ENCODE measurements at regions of chr15 and their contacts with region 1.

Region 1: GRCh38 chr15:100873029-100873677 is 6.5 kb upstream of the ALDH1A3 start:
- DNase-seq: peak; percentile 85
- H3K4me3 ChIP-seq: no peak overlapping the region
- H3K27ac ChIP-seq: no peak overlapping the region
- H3K4me1 ChIP-seq: no peaks in the 10 kb centered on the region
- H3K27me3 ChIP-seq: peaks cover 0 to 1% (median 0%) of the 10 kb centered on the region in 3 donors
- CTCF ChIP-seq: peak; percentile 90 to 98 (median 92)
- EP300 ChIP-seq: no peak
- POLR2A ChIP-seq: no peak

Region 2: GRCh38 chr15:100671858-100672543 is 201.2 kb before region 1 on chr15:
- intact Hi-C with region 1: loop called (anchors 5 kb)
- DNase-seq: no peak
- H3K4me3 ChIP-seq: no peak overlapping the region
- H3K27ac ChIP-seq: no peak overlapping the region
- H3K4me1 ChIP-seq: peaks cover 0 to 18% (median 13%) of the 10 kb centered on the region in 4 donors
- H3K27me3 ChIP-seq: no peaks in the 10 kb centered on the region
- CTCF ChIP-seq: peak in 2 of 4 experiments; percentile 37 to 45
- EP300 ChIP-seq: no peak
- POLR2A ChIP-seq: no peak